ENCODE measurements at regions of chr1 and their contacts with region 1.

Region 1: DNA sequence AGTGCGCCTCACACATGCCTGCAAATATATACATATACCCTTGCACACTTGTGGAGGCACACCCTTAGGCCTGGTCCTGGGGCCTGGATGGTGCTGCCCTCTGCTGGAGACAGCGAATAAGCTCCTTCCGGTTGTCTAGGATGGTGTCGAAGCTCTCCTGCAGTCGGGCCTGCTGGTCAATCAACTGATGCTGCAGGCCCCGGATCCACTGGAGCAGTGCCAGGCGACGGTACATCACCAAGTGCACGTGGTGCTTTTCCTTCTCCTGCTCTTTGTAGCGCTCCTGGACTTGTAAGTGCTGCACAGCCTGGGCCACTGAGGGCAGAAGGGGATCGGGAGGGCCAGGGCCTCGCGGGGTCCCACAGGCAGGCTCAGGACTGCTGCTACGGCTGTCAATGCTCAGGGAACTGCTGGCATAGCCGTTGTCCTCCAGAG is 3.1 kb downstream of the C1orf216 start:
- DNase-seq: peak; percentile 88
- H3K4me3 Mint-ChIP-seq: peak overlapping the region; percentile 42
- H3K27ac Mint-ChIP-seq: no peak overlapping the region
- H3K4me1 Mint-ChIP-seq: peaks cover 24% of the 10 kb centered on the region
- H3K27me3 Mint-ChIP-seq: no peaks in the 10 kb centered on the region

Region 2: DNA sequence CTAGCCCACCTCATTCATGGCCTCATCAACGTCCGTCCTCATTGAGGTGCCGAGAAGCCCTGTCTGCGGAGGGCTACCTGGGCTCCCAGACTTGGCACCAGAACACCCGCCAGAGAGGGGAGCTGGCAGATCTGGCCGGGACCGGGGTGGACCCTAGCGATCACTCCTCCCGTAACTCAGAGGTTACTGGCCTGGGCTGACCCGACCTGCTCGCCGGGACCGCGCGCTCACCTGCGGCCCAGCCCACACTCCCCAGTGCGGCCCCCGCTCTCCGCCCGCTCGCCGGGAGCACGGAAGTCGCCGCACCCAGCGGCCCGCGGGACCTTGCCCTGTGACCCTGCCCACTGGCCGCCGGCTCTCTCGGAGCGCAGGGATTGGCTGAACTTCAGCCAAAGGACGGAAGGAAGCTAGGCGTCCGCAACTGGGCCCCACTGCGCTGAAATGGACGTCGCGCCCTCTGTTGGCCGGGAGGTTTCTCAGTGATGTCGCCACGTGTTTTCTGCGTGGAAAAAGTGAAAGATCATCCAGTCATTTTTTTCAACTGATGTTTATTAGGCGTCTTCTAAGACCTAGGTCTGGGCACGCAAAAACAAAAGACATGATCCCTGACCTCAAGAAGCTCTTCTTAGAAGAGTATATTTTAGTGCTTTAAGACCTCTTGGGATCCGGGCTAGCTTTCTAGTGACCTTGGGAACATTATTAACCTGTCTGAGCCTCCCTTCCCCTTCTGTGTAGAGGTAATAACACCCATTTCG is 856.0 kb before region 1 on chr1 and contains the start of gene SMIM12:
- CTCF ChIA-PET with region 1: no interaction called
- intact Hi-C with region 1: loop called (anchors 10 kb)
- DNase-seq: peak; percentile 96
- H3K4me3 Mint-ChIP-seq: peak within 1 kb of the TSS; percentile 98
- H3K27ac Mint-ChIP-seq: peak within 1 kb of the TSS; percentile 94
- H3K4me1 Mint-ChIP-seq: peaks cover 53% of the 10 kb centered on the region
- H3K27me3 Mint-ChIP-seq: no peaks in the 10 kb centered on the region
- total RNA-seq, gene SMIM12: 37.6 to 38.6 TPM

Region 3: DNA sequence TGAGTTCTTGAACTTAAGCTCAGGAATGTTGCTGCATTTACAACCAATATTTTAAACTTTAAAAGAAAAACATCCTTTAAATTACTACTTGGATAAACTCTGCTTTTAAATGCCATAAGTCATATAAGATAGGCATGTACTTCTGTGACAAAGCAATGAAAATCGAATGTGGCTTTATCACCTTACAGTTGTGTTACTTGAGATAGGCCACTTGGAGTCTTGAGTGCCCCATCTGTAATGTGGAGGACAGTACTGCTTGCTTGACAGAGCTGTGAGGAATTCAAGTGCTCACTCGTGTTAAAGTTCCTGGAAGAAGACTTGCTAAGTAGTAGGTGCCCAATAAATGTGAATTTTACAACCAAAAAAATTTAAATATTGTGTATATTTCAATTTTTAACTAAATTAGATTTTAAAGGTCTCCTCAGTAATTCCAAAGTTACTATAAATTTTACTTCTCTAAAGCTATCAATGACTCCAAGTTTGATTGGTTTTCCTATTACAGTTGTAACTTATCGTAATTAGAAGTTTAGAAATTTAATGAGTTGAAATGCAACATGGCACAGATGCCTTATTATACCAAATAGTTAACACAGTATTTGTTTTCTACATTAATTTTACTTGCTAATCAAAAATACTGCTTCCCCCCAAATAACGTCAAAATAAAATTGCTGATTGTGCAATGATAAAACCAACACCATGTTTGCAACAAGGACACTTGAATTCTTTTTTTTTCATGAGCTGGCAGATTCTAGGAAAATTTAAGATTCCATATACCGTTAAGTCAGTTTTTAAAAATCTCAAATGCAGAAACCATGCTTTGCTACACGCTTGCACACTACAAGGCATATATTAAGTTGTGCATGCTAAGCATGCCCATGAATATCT is 96.1 kb before region 1 on chr1:
- CTCF ChIA-PET with region 1: interaction called, 10 read pairs
- intact Hi-C with region 1: no loop called
- DNase-seq: no peak
- H3K4me3 Mint-ChIP-seq: no peak overlapping the region
- H3K27ac Mint-ChIP-seq: no peak overlapping the region
- H3K4me1 Mint-ChIP-seq: no peaks in the 10 kb centered on the region
- H3K27me3 Mint-ChIP-seq: no peaks in the 10 kb centered on the region

Region 4: GRCh38 chr1:35688161-35688560 is 27.4 kb before region 1 on chr1:
- CTCF ChIA-PET with region 1: interaction called, 10 read pairs
- intact Hi-C with region 1: no loop called
- DNase-seq: no peak
- H3K4me3 Mint-ChIP-seq: no peak overlapping the region
- H3K27ac Mint-ChIP-seq: no peak overlapping the region
- H3K4me1 Mint-ChIP-seq: no peaks in the 10 kb centered on the region
- H3K27me3 Mint-ChIP-seq: peaks cover 6% of the 10 kb centered on the region

Region 5: DNA sequence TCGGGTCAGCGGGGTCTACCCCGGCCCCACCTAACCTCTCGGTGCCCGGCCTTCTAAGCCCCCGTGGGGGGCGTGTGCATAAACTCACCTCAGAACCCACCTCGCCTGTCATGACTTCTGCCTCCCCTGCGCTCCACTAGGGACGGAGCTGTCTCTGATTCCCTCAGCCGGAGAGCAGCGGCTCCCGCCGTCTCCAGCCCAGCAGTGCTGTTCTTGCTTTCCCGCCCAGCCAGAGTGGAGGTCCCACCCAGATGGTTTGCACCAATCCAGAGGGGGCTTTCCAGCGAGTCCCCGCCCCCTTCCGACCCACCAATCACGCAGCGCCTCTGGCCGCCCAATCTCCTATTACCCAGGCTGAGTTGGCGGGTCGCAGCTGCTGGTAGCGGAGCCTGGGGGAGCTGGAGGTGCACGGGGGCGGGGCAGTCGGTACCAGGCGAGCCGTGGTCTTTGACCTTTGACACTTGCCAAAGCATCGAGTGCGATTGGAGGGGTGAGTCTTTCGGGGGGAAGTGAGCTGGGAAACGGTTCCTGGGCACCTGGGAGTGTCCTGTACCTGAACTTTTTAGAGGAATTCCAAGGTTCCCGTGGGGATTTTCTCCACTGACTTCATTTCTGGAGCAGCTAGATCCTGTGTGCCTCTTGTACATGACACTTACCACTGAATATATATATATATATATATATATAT is 54.3 kb after region 1 on chr1 and contains the start of gene CLSPN:
- CTCF ChIA-PET with region 1: interaction called, 36 read pairs
- intact Hi-C with region 1: loop called (anchors 1 kb)
- DNase-seq: peak; percentile 98
- H3K4me3 Mint-ChIP-seq: peak within 1 kb of the TSS; percentile 98
- H3K27ac Mint-ChIP-seq: peak within 1 kb of the TSS; percentile 97
- H3K4me1 Mint-ChIP-seq: peaks cover 8% of the 10 kb centered on the region
- H3K27me3 Mint-ChIP-seq: no peaks in the 10 kb centered on the region
- total RNA-seq, gene CLSPN: 48.9 to 51.8 TPM

Measured in activated naive CD4-positive, alpha-beta T cell treated with anti-CD3 and anti-CD28 coated beads for 36 hours (primary cell).